MCF 10A (cell line): ENCODE measurements at regions of chr4 and their contacts with region 1.

Region 1: GRCh38 chr4:176340871-176341685 is 21.3 kb downstream of the SPCS3 start:
- DNase-seq: peak; percentile 60
- H3K4me3 Mint-ChIP-seq: no peak overlapping the region
- H3K27ac Mint-ChIP-seq: no peak overlapping the region
- H3K4me1 Mint-ChIP-seq: peaks cover 8% of the 10 kb centered on the region
- H3K27me3 Mint-ChIP-seq: no peaks in the 10 kb centered on the region
- CTCF ChIP-seq: peak; percentile 32

Region 2: GRCh38 chr4:175560604-175561003 is 780.5 kb before region 1 on chr4:
- CTCF ChIA-PET with region 1: interaction called, 4 read pairs
- POLR2A ChIA-PET with region 1: no interaction called
- intact Hi-C with region 1: loop called (anchors 1 kb)
- DNase-seq: peak; percentile 55
- H3K4me3 Mint-ChIP-seq: no peak overlapping the region
- H3K27ac Mint-ChIP-seq: no peak overlapping the region
- H3K4me1 Mint-ChIP-seq: peaks cover 5% of the 10 kb centered on the region
- H3K27me3 Mint-ChIP-seq: no peaks in the 10 kb centered on the region
- CTCF ChIP-seq: peak; percentile 56

Region 3: DNA sequence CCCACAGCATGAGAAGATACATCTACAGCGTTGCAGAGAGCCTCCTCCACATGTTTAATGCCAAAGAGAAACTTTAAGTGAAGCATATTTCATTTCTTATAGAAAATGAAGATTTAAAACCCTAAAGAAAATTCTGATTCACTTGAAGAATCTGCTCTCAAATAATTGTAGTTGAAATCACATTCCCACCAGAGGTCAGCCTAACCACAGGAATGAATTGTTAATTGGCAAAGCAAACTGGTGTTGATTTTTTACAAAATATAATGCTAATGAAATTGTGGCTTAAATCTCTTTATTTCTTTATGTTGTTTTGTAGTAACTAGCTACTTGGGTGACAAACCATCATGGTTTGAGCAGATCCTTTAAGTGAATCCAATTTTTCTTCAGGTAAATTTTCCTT is 306.6 kb before region 1 on chr4:
- CTCF ChIA-PET with region 1: interaction called, 71 read pairs
- POLR2A ChIA-PET with region 1: interaction called, 6 read pairs
- intact Hi-C with region 1: loop called (anchors 1 kb)
- DNase-seq: peak; percentile 56
- H3K4me3 Mint-ChIP-seq: no peak overlapping the region
- H3K27ac Mint-ChIP-seq: no peak overlapping the region
- H3K4me1 Mint-ChIP-seq: peaks cover 9% of the 10 kb centered on the region
- H3K27me3 Mint-ChIP-seq: no peaks in the 10 kb centered on the region
- CTCF ChIP-seq: peak; percentile 37

Region 4: GRCh38 chr4:176150356-176150682 is 190.8 kb before region 1 on chr4:
- CTCF ChIA-PET with region 1: interaction called, 60 read pairs
- POLR2A ChIA-PET with region 1: interaction called, 7 read pairs
- intact Hi-C with region 1: loop called (anchors 1 kb)
- DNase-seq: peak; percentile 48
- H3K4me3 Mint-ChIP-seq: no peak overlapping the region
- H3K27ac Mint-ChIP-seq: no peak overlapping the region
- H3K4me1 Mint-ChIP-seq: no peaks in the 10 kb centered on the region
- H3K27me3 Mint-ChIP-seq: no peaks in the 10 kb centered on the region
- CTCF ChIP-seq: peak; percentile 37

Region 5: GRCh38 chr4:176319704-176320339 is 21.3 kb before region 1 on chr4 and contains the start of gene SPCS3:
- CTCF ChIA-PET with region 1: interaction called, 27 read pairs
- POLR2A ChIA-PET with region 1: interaction called, 4 read pairs
- intact Hi-C with region 1: no loop called
- DNase-seq: peak; percentile 96
- H3K4me3 Mint-ChIP-seq: peak within 1 kb of the TSS; percentile 76
- H3K27ac Mint-ChIP-seq: peak within 1 kb of the TSS; percentile 74
- H3K4me1 Mint-ChIP-seq: peaks cover 6% of the 10 kb centered on the region
- H3K27me3 Mint-ChIP-seq: no peaks in the 10 kb centered on the region
- CTCF ChIP-seq: no peak
- total RNA-seq, gene SPCS3: 126 and 169 TPM in 2 replicates